HepG2 (cell line): ENCODE measurements at regions of chr15 and their contacts with region 1.

Region 1: GRCh38 chr15:75809986-75810750 is 33.1 kb upstream of the UBE2Q2 start:
- DNase-seq: peak; percentile 44
- ATAC-seq: peak; percentile 87
- H3K4me3 ChIP-seq: no peak overlapping the region
- H3K27ac ChIP-seq: no peak overlapping the region
- H3K4me1 ChIP-seq: no peaks in the 10 kb centered on the region
- H3K27me3 ChIP-seq: peaks cover 0 to 1% of the 10 kb centered on the region in 2 experiments; a peak in 1 of 5 replicates
- CTCF ChIP-seq: peak; percentile 83
- EP300 ChIP-seq: no peak
- POLR2A ChIP-seq: no peak
- RAD21 ChIP-seq: peak; percentile 60; the same call in 1 of the 2 replicates

Region 2: GRCh38 chr15:75921729-75922703 is 111.8 kb after region 1 on chr15:
- CTCF ChIA-PET with region 1: interaction called, 5 read pairs
- POLR2A ChIA-PET with region 1: no interaction called
- in situ Hi-C with region 1: loop called (anchors 10 kb)
- intact Hi-C with region 1: loop called (anchors 1 kb)
- DNase-seq: peak; percentile 51
- ATAC-seq: peak; percentile 64
- H3K4me3 ChIP-seq: no peak overlapping the region
- H3K27ac ChIP-seq: no peak overlapping the region
- H3K4me1 ChIP-seq: peaks cover 25% of the 10 kb centered on the region
- H3K27me3 ChIP-seq: no peaks in the 10 kb centered on the region; a peak in 1 of 5 replicates
- CTCF ChIP-seq: peak; percentile 55
- EP300 ChIP-seq: no peak
- POLR2A ChIP-seq: no peak
- RAD21 ChIP-seq: peak; percentile 32; the same call in 1 of the 2 replicates

Region 3: DNA sequence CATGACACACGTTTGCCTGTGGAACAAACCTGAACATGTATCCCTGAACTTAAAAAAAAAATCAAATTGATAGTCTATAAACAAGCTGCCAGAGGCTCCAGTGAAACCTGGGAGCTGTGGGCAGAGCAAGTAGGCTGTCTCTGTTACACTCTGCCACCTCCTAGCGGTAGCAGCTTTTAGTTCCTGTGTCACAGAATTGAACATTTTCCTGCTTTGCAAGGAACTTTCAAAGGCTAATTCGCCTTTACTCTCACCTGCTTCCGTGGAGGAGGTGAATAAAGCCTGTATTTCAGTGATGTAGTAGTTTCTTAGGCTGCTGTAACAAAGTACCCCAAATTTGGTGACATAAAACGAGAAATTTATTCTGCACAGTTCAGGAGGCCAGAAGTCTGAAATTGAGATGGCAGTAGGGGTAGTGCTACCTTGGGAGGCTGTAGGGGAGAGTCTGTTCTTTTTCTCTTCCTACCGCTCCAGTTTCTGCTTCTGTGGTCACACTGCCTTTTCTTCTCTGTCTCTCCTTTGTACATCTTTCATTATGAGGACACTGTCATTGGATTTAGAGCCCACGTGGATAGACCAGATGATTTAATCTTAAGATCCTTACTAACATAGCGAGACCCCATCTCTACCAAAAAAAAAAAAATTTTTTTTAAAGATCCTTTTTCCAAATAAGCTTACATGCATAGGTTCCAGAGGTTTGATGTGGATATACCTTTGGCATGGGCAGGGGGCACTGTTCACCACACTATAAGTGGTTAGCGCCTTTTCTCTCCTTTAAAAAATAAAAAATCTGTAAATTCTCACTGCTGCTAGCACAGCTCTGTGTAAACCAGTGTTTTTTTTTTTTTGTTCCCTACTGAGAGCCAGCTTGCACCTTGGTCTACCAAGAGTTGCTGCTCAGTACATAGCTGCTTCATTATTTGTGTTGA is 118.8 kb after region 1 on chr15:
- CTCF ChIA-PET with region 1: no interaction called
- POLR2A ChIA-PET with region 1: no interaction called
- in situ Hi-C with region 1: loop called (anchors 10 kb)
- intact Hi-C with region 1: loop called (anchors 1 kb)
- DNase-seq: peak; percentile 20
- ATAC-seq: peak; percentile 62
- H3K4me3 ChIP-seq: no peak overlapping the region
- H3K27ac ChIP-seq: no peak overlapping the region
- H3K4me1 ChIP-seq: no peaks in the 10 kb centered on the region
- H3K27me3 ChIP-seq: no peaks in the 10 kb centered on the region
- CTCF ChIP-seq: peak; percentile 33; the same call in 1 of the 2 replicates
- EP300 ChIP-seq: no peak
- POLR2A ChIP-seq: no peak
- RAD21 ChIP-seq: 0 out of 2 replicates have a peak, but pooled peaks have one; percentile 17

Region 4: GRCh38 chr15:76139368-76140073 is 329.4 kb after region 1 on chr15:
- CTCF ChIA-PET with region 1: interaction called, 6 read pairs
- POLR2A ChIA-PET with region 1: no interaction called
- in situ Hi-C with region 1: loop called (anchors 5 kb)
- intact Hi-C with region 1: no loop called
- DNase-seq: peak; percentile 57
- ATAC-seq: peak; percentile 89
- H3K4me3 ChIP-seq: no peak overlapping the region
- H3K27ac ChIP-seq: no peak overlapping the region
- H3K4me1 ChIP-seq: no peaks in the 10 kb centered on the region
- H3K27me3 ChIP-seq: peaks cover 1 to 20% of the 10 kb centered on the region in 2 experiments; a peak in 4 of 5 replicates
- CTCF ChIP-seq: peak; percentile 90
- EP300 ChIP-seq: no peak
- POLR2A ChIP-seq: no peak
- RAD21 ChIP-seq: peak; percentile 91